Dendritic cell treated with granulocyte-macrophage colony-stimulating factor and Interleukin-4, amounts not matched to agents 40 ng/mL and 50 ng/mL, for 4 days (primary cell): ENCODE measurements at regions of chr6 and their contacts with region 1.

Region 1: GRCh38 chr6:119147101-119148053 is 68.9 kb upstream of the FAM184A start:
- H3K4me3 Mint-ChIP-seq: peak overlapping the region; percentile 17
- H3K27ac Mint-ChIP-seq: peak overlapping the region; percentile 82
- H3K4me1 Mint-ChIP-seq: peaks cover 38% of the 10 kb centered on the region
- H3K27me3 Mint-ChIP-seq: no peaks in the 10 kb centered on the region

Region 2: DNA sequence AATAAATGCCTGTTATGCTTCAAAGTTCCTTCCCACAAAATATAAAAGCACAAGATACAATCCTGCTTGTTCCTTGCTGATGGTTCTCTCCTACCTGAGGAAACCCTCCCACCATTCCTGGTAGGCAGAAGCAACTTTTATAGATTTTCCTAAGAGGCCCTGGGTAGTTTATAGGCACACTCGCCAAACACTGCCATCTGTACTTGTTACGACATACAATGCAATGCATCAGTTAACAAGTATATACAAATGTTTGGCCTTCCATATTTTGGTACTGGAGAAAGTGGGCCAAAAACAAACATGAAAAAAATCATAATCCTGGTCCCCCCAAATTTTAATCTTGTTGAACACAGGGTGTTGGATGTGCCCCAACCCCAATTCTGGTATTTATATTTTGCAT is 229.1 kb before region 1 on chr6:
- intact Hi-C with region 1: no loop called
- H3K4me3 Mint-ChIP-seq: no peak overlapping the region
- H3K27ac Mint-ChIP-seq: no peak overlapping the region
- H3K4me1 Mint-ChIP-seq: no peaks in the 10 kb centered on the region
- H3K27me3 Mint-ChIP-seq: no peaks in the 10 kb centered on the region

Region 3: DNA sequence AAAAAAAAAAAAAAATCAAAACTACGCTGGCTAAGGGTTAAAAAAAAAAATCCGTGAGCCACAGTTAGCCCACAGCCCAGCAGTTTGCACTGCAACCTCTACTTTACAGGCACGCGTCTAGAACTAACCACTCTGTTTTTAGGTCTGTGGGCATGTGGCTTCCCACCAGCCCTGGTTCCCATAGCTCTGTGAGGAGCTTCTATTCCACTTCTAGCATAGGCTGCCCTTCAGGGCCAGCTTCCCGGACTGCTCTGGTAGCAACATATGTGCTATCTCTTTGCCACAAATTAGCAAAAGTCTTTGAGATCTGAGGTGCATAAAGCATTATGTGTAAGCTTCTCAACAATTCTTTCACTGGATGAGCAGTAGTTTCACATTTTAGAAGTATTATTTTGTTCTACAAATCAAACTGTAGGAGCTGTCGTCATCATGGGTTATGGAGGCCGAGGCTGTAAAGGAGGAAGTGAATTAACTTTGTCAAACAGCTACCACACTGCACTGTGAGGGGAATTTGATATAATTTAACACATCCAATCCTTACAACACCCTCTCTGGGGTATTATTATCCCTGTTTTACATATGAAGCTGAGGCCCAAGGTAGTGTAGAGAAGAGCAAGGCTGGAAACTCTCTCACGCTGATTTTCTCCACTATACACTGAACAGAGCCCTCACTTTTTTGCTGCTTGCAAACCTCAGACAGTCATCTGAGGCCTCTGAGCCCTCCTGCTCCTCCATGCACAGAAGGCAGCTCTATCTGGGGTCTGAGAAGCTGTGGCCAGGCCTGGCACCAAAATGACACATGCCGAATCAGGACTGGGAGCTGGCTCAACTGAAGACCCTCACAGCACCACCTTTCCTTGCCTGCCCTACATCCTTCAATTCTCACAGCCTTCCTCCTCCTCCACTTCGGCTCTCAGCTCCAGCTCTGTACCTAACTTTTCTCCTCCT is 166.8 kb after region 1 on chr6:
- intact Hi-C with region 1: loop called (anchors 10 kb)
- H3K4me3 Mint-ChIP-seq: no peak overlapping the region
- H3K27ac Mint-ChIP-seq: peak overlapping the region; percentile 64
- H3K4me1 Mint-ChIP-seq: peaks cover 50% of the 10 kb centered on the region
- H3K27me3 Mint-ChIP-seq: peaks cover 2% of the 10 kb centered on the region

Region 4: GRCh38 chr6:119978274-119978889 is 831.0 kb after region 1 on chr6:
- intact Hi-C with region 1: loop called (anchors 5 kb)
- H3K4me3 Mint-ChIP-seq: no peak overlapping the region
- H3K27ac Mint-ChIP-seq: no peak overlapping the region
- H3K4me1 Mint-ChIP-seq: no peaks in the 10 kb centered on the region
- H3K27me3 Mint-ChIP-seq: no peaks in the 10 kb centered on the region